GM12878 (cell line): ENCODE measurements at regions of chr4 and their contacts with region 1.

Region 1: DNA sequence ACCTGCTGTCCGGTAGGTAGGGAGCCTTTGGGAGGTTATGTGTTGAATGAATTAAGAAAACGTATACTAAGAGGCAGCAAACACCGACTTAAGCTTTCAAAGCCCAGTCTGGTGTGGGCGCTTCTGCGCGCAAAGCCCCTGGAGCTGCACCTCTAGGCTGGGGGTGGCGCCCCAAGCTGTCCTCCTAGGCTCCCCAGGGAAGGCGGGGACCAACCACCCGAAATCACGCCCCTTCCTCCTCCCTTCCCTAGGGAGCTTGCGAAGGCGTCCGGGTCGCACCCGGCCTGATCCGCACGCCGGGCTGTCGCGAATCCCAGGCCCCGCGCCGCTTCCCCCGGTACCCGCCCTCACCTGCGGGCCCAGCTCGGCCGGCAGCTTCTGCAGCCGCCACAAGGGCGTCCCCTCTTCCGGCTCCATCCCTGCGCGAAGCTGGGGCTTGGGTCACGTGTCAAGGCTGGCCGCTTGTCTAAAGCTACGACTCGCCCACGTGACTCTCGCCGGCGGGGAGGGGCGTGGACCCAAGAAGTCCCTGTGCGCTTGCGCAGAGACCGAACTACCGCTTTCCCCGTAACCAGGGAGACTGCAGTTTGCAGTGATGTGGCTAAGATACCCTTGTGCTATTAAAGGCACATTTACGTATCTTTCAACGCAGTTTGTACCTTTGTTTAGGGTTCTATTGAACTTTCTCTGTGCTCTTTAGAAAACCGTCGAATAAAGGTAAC is at the start of gene COMMD8:
- DNase-seq: peak; percentile 91
- ATAC-seq: peak; percentile 87
- H3K4me3 ChIP-seq: peak within 1 kb of the TSS; percentile 92
- H3K27ac ChIP-seq: peak within 1 kb of the TSS; percentile 79
- H3K4me1 ChIP-seq: peaks cover 22% of the 10 kb centered on the region
- H3K27me3 ChIP-seq: no peaks in the 10 kb centered on the region
- CTCF ChIP-seq: peak; percentile 22 to 41 (median 34); a peak in 5 of 6 replicates
- EP300 ChIP-seq: peak in 1 of 2 experiments; percentile 25; a peak in 1 of 4 replicates
- POLR2A ChIP-seq: peak; percentile 96
- RAD21 ChIP-seq: peak; percentile 1; the same call in 1 of the 2 replicates
- polyA plus RNA-seq, gene COMMD8: 126 to 152 TPM

Region 2: DNA sequence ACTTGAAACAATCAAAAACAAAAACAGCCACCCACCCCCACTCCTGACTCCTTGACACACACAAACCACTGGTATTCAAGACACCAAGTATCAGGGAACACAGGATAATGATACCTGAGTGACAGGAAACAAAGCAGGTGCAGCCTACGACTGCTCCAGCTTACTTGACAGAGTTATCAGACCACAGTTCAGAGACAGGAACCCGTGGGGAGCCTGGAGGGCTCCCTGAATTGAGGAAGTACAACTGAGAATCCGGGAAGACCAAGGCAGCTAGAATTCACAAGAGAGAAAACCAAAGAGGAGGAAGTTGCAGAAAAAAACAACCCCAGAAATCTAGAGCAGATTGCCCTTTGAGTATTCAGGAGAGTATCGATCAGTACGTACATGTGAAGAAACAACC is 20.4 kb before region 1 on chr4:
- CTCF ChIA-PET with region 1: interaction called, 4 read pairs
- POLR2A ChIA-PET with region 1: interaction called, 3 read pairs
- RAD21 ChIA-PET with region 1: interaction called, 3 read pairs
- SMC1A ChIA-PET with region 1: interaction called, 14 read pairs
- in situ Hi-C with region 1: no loop called
- intact Hi-C with region 1: no loop called
- DNase-seq: no peak
- ATAC-seq: peak; percentile 62
- H3K4me3 ChIP-seq: no peak overlapping the region
- H3K27ac ChIP-seq: no peak overlapping the region
- H3K4me1 ChIP-seq: peaks cover 3% of the 10 kb centered on the region; the same call in 1 of the 2 replicates
- H3K27me3 ChIP-seq: no peaks in the 10 kb centered on the region
- CTCF ChIP-seq: no peak
- EP300 ChIP-seq: no peak
- POLR2A ChIP-seq: no peak
- RAD21 ChIP-seq: no peak

Region 3: GRCh38 chr4:47499700-47500099 is 36.3 kb after region 1 on chr4:
- CTCF ChIA-PET with region 1: interaction called, 25 read pairs
- POLR2A ChIA-PET with region 1: interaction called, 7 read pairs
- RAD21 ChIA-PET with region 1: interaction called, 38 read pairs
- SMC1A ChIA-PET with region 1: interaction called, 29 read pairs
- in situ Hi-C with region 1: no loop called
- intact Hi-C with region 1: no loop called
- DNase-seq: no peak
- ATAC-seq: peak; percentile 61
- H3K4me3 ChIP-seq: peak overlapping the region; percentile 26; the same call in 1 of the 2 replicates
- H3K27ac ChIP-seq: peak overlapping the region; percentile 80
- H3K4me1 ChIP-seq: peaks cover 25% of the 10 kb centered on the region
- H3K27me3 ChIP-seq: no peaks in the 10 kb centered on the region
- CTCF ChIP-seq: no peak
- EP300 ChIP-seq: no peak
- POLR2A ChIP-seq: no peak
- RAD21 ChIP-seq: no peak